ENCODE measurements at regions of chr12 and their contacts with region 1.

Region 1: GRCh38 chr12:109586385-109587296 is 13.0 kb downstream of the MVK start:
- DNase-seq: no peak
- H3K4me3 ChIP-seq: no peak overlapping the region
- H3K27ac ChIP-seq: no peak overlapping the region
- H3K4me1 ChIP-seq: peaks cover 0 to 23% of the 10 kb centered on the region in 2 experiments; a peak in 2 of 4 replicates
- H3K27me3 ChIP-seq: no peaks in the 10 kb centered on the region
- CTCF ChIP-seq: no peak
- EP300 ChIP-seq: no peak
- RAD21 ChIP-seq: no peak

Region 2: DNA sequence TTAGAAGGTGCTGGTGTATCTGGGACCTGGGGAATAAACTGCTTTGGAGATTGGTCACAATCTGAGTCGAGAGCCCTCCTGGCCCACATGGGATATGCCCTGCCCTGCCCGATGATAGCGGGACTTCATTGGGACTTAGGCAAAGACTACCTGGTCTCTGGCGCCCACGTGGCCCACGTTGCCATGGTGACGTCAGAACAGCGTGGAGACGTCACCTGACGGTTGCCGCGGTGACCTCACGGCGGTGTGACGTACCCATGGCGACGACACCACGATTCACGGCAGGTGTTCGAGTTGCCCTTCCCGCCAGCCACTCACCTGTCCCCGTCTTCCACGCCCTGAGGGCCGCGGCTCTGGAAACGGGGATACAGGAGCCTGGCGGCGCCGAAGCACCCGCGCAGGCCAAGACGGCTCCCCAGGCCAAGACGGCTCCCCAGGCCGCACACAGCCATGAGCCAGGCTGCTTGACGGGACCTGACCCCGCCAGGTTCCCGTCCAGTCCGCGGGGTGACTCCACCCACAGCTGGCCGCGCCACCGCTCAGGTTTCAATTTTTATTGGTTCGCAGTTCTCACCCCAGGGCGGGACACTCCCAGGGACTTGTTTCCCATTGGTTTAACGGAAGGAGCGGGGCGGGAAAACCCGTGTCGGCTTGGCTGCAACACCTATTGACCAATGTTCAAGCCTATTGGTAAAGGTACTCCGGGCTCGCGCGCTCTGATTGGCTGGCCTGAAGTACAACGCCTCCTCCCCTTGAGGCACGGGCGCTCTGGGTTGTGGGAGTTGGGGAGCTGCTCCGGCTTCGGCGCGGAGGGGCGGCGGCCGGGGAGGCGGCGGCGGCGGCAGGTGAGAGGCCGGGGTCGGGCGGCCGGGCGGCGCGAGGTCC is 13.4 kb before region 1 on chr12 and contains the starts of genes MMAB and MVK:
- CTCF ChIA-PET with region 1: interaction called, 10 read pairs
- POLR2A ChIA-PET with region 1: interaction called, 4 read pairs
- DNase-seq: peak; percentile 98
- H3K4me3 ChIP-seq: peak within 1 kb of the TSS; percentile 66 to 77
- H3K27ac ChIP-seq: peak within 1 kb of the TSS; percentile 36 to 82; a peak in 3 of 4 replicates
- H3K4me1 ChIP-seq: peaks cover 0 to 14% of the 10 kb centered on the region in 2 experiments; a peak in 2 of 4 replicates
- H3K27me3 ChIP-seq: no peaks in the 10 kb centered on the region
- CTCF ChIP-seq: no peak
- EP300 ChIP-seq: no peak
- RAD21 ChIP-seq: no peak
- polyA plus RNA-seq, gene MMAB: 14.8 and 15.9 TPM in 2 replicates
- polyA plus RNA-seq, gene MVK: 6.3 and 7.0 TPM in 2 replicates

Region 3: GRCh38 chr12:110234755-110235154 is 648.1 kb after region 1 on chr12:
- CTCF ChIA-PET with region 1: no interaction called
- POLR2A ChIA-PET with region 1: no interaction called
- DNase-seq: no peak
- H3K4me3 ChIP-seq: no peak overlapping the region
- H3K27ac ChIP-seq: no peak overlapping the region
- H3K4me1 ChIP-seq: no peaks in the 10 kb centered on the region; a peak in 1 of 4 replicates
- H3K27me3 ChIP-seq: no peaks in the 10 kb centered on the region
- CTCF ChIP-seq: no peak
- EP300 ChIP-seq: no peak
- RAD21 ChIP-seq: no peak

Measured in SK-N-SH (cell line).